Ascending aorta (tissue), 2 donors: ENCODE measurements at regions of chr18 and their contacts with region 1.

Region 1: DNA sequence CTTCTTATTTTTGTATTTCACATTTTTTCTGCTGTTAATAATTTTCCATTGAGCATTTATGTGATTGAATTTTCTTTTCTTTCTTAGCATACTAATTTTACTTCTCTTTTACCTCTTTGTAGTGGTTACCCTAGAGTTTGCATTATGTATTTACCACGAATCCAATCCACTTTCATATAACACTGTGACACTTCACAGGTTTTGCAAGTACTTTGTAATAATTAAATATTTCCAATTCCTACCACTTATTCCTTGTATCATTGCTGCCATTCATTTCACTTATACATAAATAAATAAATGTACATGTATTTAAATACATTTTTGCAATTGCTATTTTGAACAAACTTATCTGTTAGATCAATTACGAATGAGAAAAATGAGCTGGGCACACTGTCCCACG is 110.8 kb downstream of the TGIF1 start:
- DNase-seq: no peak
- H3K4me3 ChIP-seq: no peak overlapping the region
- H3K27ac ChIP-seq: peak overlapping the region in 1 of 2 donors; percentile 2
- H3K4me1 ChIP-seq: no peaks in the 10 kb centered on the region
- H3K27me3 ChIP-seq: no peaks in the 10 kb centered on the region
- CTCF ChIP-seq: no peak

Region 2: DNA sequence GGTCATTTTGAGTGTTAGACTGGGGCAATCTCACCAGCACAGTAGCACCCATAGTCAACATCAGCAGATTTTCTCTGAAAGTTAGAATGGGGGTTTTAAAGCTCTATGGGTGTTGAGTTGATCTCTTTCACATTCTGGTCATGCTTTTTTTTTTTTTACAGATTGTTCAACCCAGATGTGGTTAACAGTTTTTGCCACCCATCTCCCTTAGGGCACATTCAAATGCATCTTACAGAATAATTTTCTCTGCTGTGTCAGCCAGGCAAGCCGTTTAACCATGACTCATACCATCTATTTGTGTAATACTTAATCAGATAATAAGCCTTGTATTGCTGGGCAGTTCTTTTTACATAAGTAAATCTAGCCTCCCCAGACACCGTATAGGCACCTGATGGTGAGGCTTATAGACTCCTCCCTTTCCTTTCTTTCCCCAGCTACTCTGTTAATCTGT is 48.8 kb before region 1 on chr18:
- intact Hi-C with region 1: loop called (anchors 10 kb)
- DNase-seq: no peak
- H3K4me3 ChIP-seq: no peak overlapping the region
- H3K27ac ChIP-seq: no peak overlapping the region
- H3K4me1 ChIP-seq: no peaks in the 10 kb centered on the region
- H3K27me3 ChIP-seq: no peaks in the 10 kb centered on the region
- CTCF ChIP-seq: no peak